Thyroid gland (tissue), 4 donors: ENCODE measurements at regions of chr12 and their contacts with region 1.

Region 1: GRCh38 chr12:8069582-8069981 is 3.4 kb upstream of the C3AR1 start:
- DNase-seq: no peak
- H3K4me3 ChIP-seq: no peak overlapping the region
- H3K27ac ChIP-seq: no peak overlapping the region
- H3K4me1 ChIP-seq: no peaks in the 10 kb centered on the region
- H3K27me3 ChIP-seq: no peaks in the 10 kb centered on the region
- CTCF ChIP-seq: no peak
- POLR2A ChIP-seq: no peak

Region 2: GRCh38 chr12:8011331-8011730 is 58.3 kb before region 1 on chr12:
- intact Hi-C with region 1: no loop called
- DNase-seq: no peak
- H3K4me3 ChIP-seq: no peak overlapping the region
- H3K27ac ChIP-seq: no peak overlapping the region
- H3K4me1 ChIP-seq: no peaks in the 10 kb centered on the region
- H3K27me3 ChIP-seq: no peaks in the 10 kb centered on the region
- CTCF ChIP-seq: no peak
- POLR2A ChIP-seq: no peak

Region 3: GRCh38 chr12:8054816-8055215 is 14.8 kb before region 1 on chr12:
- intact Hi-C with region 1: loop called (anchors 2 kb)
- DNase-seq: no peak
- H3K4me3 ChIP-seq: no peak overlapping the region
- H3K27ac ChIP-seq: no peak overlapping the region
- H3K4me1 ChIP-seq: no peaks in the 10 kb centered on the region
- H3K27me3 ChIP-seq: no peaks in the 10 kb centered on the region
- CTCF ChIP-seq: no peak
- POLR2A ChIP-seq: no peak